Endothelial cell of umbilical vein (primary cell): ENCODE measurements at regions of chr2 and their contacts with region 1.

Region 1: DNA sequence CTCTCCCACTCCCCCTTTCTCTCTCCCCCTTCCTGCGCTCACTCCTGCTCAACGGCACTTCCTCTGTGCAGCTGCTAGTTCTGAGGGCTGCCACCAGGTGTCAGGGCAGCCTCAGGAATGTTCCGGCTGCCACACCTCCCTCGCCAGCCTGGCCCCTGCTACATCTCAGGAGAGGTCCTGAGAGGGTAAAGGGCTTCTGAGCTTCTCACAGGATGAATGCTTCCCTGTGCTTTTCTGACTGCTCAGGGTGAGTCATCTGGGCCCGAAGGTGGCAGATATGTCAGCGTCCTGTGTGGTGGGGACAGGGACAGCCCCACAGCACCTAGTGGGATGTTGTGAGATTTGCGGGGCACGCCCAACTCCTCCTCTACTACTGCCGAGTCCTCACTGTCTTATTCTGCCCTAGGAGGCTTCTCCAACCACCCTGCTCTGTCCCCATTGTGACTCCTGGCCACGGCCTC is 49.0 kb downstream of the PLEKHB2 start:
- DNase-seq: peak; percentile 62
- H3K4me3 ChIP-seq: no peak overlapping the region
- H3K27ac ChIP-seq: no peak overlapping the region
- H3K4me1 ChIP-seq: no peaks in the 10 kb centered on the region
- H3K27me3 ChIP-seq: peaks cover 0 to 2% of the 10 kb centered on the region in 2 experiments
- CTCF ChIP-seq: peak; percentile 79 to 84
- POLR2A ChIP-seq: no peak

Region 2: DNA sequence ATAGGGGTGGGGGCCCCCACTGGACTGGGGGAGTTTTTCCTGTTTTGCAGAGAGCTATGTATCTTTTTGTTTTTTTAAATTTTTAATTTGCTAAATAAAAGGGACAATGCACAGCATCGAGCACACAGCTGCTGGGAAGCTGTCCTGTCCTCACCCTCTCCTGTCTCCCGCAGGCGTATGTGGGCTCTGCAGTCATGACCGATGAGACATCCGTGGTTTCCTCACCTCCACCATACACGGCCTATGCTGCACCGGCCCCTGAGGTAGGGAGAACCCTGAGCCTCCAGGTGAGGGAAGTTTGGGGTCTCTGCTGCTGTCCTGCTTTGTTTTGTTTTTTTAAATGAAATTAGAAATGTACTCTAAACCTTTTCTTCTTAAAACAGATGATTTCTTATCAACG is 21.4 kb before region 1 on chr2:
- CTCF ChIA-PET with region 1: interaction called, 11 read pairs
- POLR2A ChIA-PET with region 1: no interaction called
- dilution Hi-C with region 1: no loop called
- intact Hi-C with region 1: no loop called
- DNase-seq: no peak
- H3K4me3 ChIP-seq: no peak overlapping the region
- H3K27ac ChIP-seq: no peak overlapping the region
- H3K4me1 ChIP-seq: no peaks in the 10 kb centered on the region
- H3K27me3 ChIP-seq: no peaks in the 10 kb centered on the region
- CTCF ChIP-seq: no peak
- POLR2A ChIP-seq: no peak

Region 3: GRCh38 chr2:131413148-131413747 is 259.1 kb after region 1 on chr2:
- CTCF ChIA-PET with region 1: interaction called, 17 read pairs
- POLR2A ChIA-PET with region 1: no interaction called
- dilution Hi-C with region 1: no loop called
- intact Hi-C with region 1: loop called (anchors 1 kb)
- DNase-seq: peak; percentile 79
- H3K4me3 ChIP-seq: no peak overlapping the region
- H3K27ac ChIP-seq: no peak overlapping the region
- H3K4me1 ChIP-seq: no peaks in the 10 kb centered on the region
- H3K27me3 ChIP-seq: peaks cover 17 to 25% of the 10 kb centered on the region in 2 experiments
- CTCF ChIP-seq: peak; percentile 42 to 50
- POLR2A ChIP-seq: no peak

Region 4: GRCh38 chr2:131521961-131522794 is 368.1 kb after region 1 on chr2:
- CTCF ChIA-PET with region 1: no interaction called
- POLR2A ChIA-PET with region 1: no interaction called
- dilution Hi-C with region 1: no loop called
- intact Hi-C with region 1: no loop called
- DNase-seq: no peak
- H3K4me3 ChIP-seq: no peak overlapping the region
- H3K27ac ChIP-seq: no peak overlapping the region
- H3K4me1 ChIP-seq: no peaks in the 10 kb centered on the region
- H3K27me3 ChIP-seq: no peaks in the 10 kb centered on the region
- CTCF ChIP-seq: no peak
- POLR2A ChIP-seq: no peak